Left ventricle myocardium superior (tissue), 1 donor: ENCODE measurements at regions of chr7 and their contacts with region 1.

Region 1: GRCh38 chr7:77729574-77730348 is 33.5 kb downstream of the RSBN1L start:
- DNase-seq: no peak
- ATAC-seq: no peak

Region 2: DNA sequence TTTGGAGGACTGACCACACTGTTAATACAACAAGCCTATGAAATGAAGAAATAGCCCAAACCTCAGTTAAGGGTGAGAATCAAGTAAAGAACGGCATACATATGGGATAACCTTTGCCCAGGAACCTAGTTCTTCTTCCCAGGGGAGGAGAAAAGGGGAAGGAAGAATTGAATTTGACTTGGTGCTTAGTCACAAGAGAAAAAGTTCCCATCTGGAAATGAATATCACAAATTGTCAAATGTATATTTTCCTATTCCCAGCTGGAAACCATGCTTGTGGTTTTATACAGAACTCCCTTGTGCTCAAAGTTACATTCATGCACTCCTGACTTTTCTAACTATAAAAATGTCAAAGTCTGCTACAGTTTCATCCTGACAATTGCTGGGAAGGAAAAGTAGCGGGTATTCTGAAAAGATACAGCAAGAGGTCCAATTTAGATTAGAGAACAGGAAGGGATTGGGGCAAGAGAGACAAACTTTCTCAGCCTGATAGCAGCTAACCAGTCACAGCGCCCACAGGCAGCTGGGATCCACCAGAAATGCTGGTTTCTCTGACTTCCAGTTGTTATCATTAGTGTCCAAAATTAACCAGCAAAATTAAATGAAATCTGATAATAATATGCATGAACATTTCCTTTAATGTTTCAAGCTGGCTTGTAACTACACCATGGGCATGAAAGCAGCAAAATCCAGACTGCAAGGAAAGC is 295.0 kb before region 1 on chr7:
- intact Hi-C with region 1: no loop called
- DNase-seq: no peak
- ATAC-seq: no peak

Region 3: GRCh38 chr7:77783111-77783510 is 53.4 kb after region 1 on chr7:
- intact Hi-C with region 1: loop called (anchors 2 kb)
- DNase-seq: no peak
- ATAC-seq: no peak